ENCODE measurements at regions of chr6 and their contacts with region 1.

Region 1: GRCh38 chr6:159174263-159174969 is 5.2 kb downstream of the FNDC1 start:
- DNase-seq: peak; percentile 74 to 90 (median 87)
- ATAC-seq: peak; percentile 88 to 89
- H3K4me3 ChIP-seq: no peak overlapping the region
- H3K27ac ChIP-seq: no peak overlapping the region
- H3K4me1 ChIP-seq: no peaks in the 10 kb centered on the region
- H3K27me3 ChIP-seq: no peaks in the 10 kb centered on the region

Region 2: GRCh38 chr6:157974341-157974894 is 1200.0 kb before region 1 on chr6:
- intact Hi-C with region 1: no loop called
- DNase-seq: peak in 1 of 3 donors; percentile 11
- ATAC-seq: no peak
- H3K4me3 ChIP-seq: no peak overlapping the region
- H3K27ac ChIP-seq: no peak overlapping the region
- H3K4me1 ChIP-seq: no peaks in the 10 kb centered on the region
- H3K27me3 ChIP-seq: no peaks in the 10 kb centered on the region

Region 3: DNA sequence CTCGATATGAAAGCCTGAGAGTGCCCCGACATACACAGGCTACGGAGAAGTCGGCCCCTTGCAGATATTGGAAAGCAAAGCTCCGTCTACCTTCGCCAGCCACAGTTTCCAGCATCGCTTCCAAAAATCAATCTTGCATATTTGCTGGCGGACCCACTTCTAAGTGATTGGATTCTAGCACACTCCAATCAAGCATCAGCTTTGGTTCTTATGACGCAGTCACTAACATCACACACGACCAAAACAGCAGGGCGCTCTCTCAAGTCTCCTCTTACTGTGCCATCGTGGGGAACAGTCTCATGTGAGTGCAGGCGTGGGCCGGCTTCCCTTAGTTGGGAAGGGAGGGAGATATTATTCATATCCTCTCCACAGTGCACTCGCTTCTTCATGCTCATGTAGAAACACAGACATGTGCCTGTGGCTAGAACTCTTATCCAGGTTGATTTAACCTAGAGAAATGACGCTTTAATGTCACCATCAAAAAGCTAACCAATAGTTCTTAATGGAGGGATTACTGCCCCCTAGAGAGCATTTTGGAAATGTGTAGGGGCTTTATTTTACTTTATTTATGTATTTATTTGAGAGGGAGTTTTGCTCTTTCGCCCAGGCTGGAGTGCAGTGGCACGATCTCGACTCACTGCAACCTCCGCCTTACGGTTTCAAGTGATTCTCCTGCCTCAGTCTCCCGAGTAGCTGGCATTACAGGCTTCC is 288.9 kb after region 1 on chr6:
- intact Hi-C with region 1: loop called in 1 of 4 experiments (anchors 10 kb)
- DNase-seq: no peak
- ATAC-seq: no peak
- H3K4me3 ChIP-seq: no peak overlapping the region
- H3K27ac ChIP-seq: no peak overlapping the region
- H3K4me1 ChIP-seq: no peaks in the 10 kb centered on the region
- H3K27me3 ChIP-seq: no peaks in the 10 kb centered on the region

Region 4: DNA sequence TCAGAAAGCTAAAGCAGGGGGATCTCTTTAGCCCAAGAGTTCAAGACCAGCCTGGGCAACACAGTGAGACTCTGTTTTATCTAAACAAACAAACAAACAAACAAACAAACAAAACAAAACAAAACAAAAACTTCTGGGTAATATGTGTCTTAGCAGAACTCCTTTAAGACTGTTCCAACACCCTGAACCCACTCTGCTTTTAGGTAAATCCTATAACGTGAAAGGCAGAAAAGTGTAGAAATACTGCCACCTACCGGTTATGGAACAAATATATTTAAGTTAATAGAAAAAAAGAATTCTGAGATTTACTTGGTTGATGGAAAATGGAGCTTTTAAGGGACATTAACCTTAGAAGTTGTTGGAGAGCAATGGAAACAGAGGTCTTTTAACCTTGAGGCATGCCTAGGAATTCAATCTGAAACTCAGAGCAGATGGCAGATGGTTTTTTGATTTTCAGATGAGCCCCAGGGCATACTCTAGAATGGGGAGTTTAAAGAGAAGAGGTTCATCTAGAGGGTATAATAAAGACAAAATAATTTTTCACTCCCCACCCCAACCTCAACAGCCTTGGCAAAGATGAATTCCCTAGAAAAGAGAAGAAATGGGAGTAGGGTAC is 480.2 kb after region 1 on chr6:
- intact Hi-C with region 1: loop called (anchors 5 to 10 kb)
- DNase-seq: no peak
- ATAC-seq: no peak
- H3K4me3 ChIP-seq: no peak overlapping the region
- H3K27ac ChIP-seq: no peak overlapping the region
- H3K4me1 ChIP-seq: no peaks in the 10 kb centered on the region
- H3K27me3 ChIP-seq: no peaks in the 10 kb centered on the region